ENCODE measurements at regions of chr7 and their contacts with region 1.

Region 1: DNA sequence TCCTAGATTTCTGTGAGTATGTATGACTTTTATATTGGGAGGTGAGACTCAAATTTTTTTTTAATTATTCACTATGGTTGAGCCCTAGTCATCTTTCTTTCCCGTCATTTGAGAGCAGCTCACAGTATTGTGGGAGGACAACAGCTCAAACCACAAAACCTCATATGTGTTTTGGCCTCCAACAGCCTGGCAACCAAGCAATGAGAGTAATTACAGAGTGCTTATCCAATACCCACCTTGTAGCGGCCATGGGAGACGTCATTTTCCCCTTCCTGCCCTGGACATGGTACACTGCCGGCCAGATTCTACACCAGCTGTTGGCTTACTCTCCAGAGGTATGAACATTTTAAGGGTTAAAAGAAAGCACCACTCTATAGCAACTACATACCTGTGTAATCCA is 49.1 kb downstream of the DOCK4 start:
- DNase-seq: no peak
- H3K4me3 ChIP-seq: no peak overlapping the region
- H3K27ac ChIP-seq: no peak overlapping the region
- H3K4me1 ChIP-seq: peaks cover 0 to 15% (median 4%) of the 10 kb centered on the region in 4 donors
- H3K27me3 ChIP-seq: no peaks in the 10 kb centered on the region
- CTCF ChIP-seq: no peak
- EP300 ChIP-seq: no peak
- POLR2A ChIP-seq: no peak

Region 2: GRCh38 chr7:110645060-110645459 is 1512.0 kb before region 1 on chr7:
- in situ Hi-C with region 1: no loop called
- intact Hi-C with region 1: loop called (anchors 10 kb)
- DNase-seq: no peak
- H3K4me3 ChIP-seq: no peak overlapping the region
- H3K27ac ChIP-seq: no peak overlapping the region
- H3K4me1 ChIP-seq: no peaks in the 10 kb centered on the region
- H3K27me3 ChIP-seq: no peaks in the 10 kb centered on the region
- CTCF ChIP-seq: no peak
- EP300 ChIP-seq: no peak
- POLR2A ChIP-seq: no peak

Measured in transverse colon (tissue), 4 donors.